HCT116 (cell line): ENCODE measurements at regions of chr9 and their contacts with region 1.

Region 1: GRCh38 chr9:13088720-13089427 is 190.6 kb downstream of the MPDZ start:
- DNase-seq: peak; percentile 41
- ATAC-seq: peak; percentile 81
- H3K4me3 ChIP-seq: no peak overlapping the region
- H3K27ac ChIP-seq: no peak overlapping the region
- H3K4me1 ChIP-seq: no peaks in the 10 kb centered on the region
- H3K27me3 ChIP-seq: peaks cover 17% of the 10 kb centered on the region; the same call in 1 of the 2 replicates
- CTCF ChIP-seq: peak; percentile 27 to 73 (median 54); a peak in 5 of 6 replicates
- POLR2A ChIP-seq: no peak
- RAD21 ChIP-seq: peak; percentile 66

Region 2: GRCh38 chr9:12702160-12702758 is 386.6 kb before region 1 on chr9:
- CTCF ChIA-PET with region 1: interaction called, 4 read pairs
- POLR2A ChIA-PET with region 1: no interaction called
- RAD21 ChIA-PET with region 1: no interaction called
- intact Hi-C with region 1: loop called (anchors 2 kb)
- DNase-seq: peak; percentile 56
- ATAC-seq: peak; percentile 91
- H3K4me3 ChIP-seq: no peak overlapping the region
- H3K27ac ChIP-seq: no peak overlapping the region
- H3K4me1 ChIP-seq: no peaks in the 10 kb centered on the region
- H3K27me3 ChIP-seq: 0 out of 2 replicates have a peak, but pooled peaks cover 4% of the 10 kb centered on the region
- CTCF ChIP-seq: peak; percentile 59 to 77 (median 59); a peak in 5 of 6 replicates
- POLR2A ChIP-seq: no peak
- RAD21 ChIP-seq: peak; percentile 82